ENCODE measurements at regions of chr18 and their contacts with region 1.

Region 1: DNA sequence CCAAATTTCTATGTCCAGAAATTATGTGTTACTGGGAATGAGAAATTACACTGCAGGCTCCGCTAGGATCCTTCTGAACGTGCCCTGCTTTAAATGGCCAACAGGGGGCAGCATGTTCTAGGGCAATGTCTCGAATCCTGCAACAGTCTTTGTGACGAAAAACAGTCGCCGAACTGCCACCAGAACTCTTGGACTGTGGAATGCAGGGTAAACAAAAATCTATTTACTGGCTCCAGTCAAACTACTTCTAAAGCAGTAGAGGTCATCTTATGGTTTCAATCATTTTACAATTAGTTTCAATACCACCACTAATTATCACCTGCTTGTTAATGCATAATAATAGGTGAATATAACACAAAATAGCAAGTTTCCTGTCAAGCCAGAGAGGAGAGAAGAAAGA is 9.8 kb upstream of the ZNF397 start:
- H3K4me3 Mint-ChIP-seq: no peak overlapping the region
- H3K27ac Mint-ChIP-seq: no peak overlapping the region
- H3K4me1 Mint-ChIP-seq: peaks cover 4% of the 10 kb centered on the region
- H3K27me3 Mint-ChIP-seq: no peaks in the 10 kb centered on the region

Region 2: GRCh38 chr18:34738176-34738894 is 492.7 kb before region 1 on chr18:
- intact Hi-C with region 1: no loop called
- H3K4me3 Mint-ChIP-seq: no peak overlapping the region
- H3K27ac Mint-ChIP-seq: no peak overlapping the region
- H3K4me1 Mint-ChIP-seq: no peaks in the 10 kb centered on the region
- H3K27me3 Mint-ChIP-seq: no peaks in the 10 kb centered on the region

Region 3: GRCh38 chr18:35355140-35355618 is 124.1 kb after region 1 on chr18:
- intact Hi-C with region 1: loop called (anchors 1 kb)
- H3K4me3 Mint-ChIP-seq: no peak overlapping the region
- H3K27ac Mint-ChIP-seq: no peak overlapping the region
- H3K4me1 Mint-ChIP-seq: no peaks in the 10 kb centered on the region
- H3K27me3 Mint-ChIP-seq: no peaks in the 10 kb centered on the region

Measured in dendritic cell treated with granulocyte-macrophage colony-stimulating factor and Interleukin-4, amounts not matched to agents 40 ng/mL and 50 ng/mL, for 4 days (primary cell).